Activated T-helper 2 cell treated with anti-CD3 and anti-CD28 coated beads, Interferon-gamma antibody, Interleukin-2, Interleukin-4, amounts not matched to agents 10 μg/mL and 5 μg/mL and 100 μg/mL, durations not matched to agents 14 hours and 24 hours and 36 hours (primary cell): ENCODE measurements at regions of chr10 and their contacts with region 1.

Region 1: DNA sequence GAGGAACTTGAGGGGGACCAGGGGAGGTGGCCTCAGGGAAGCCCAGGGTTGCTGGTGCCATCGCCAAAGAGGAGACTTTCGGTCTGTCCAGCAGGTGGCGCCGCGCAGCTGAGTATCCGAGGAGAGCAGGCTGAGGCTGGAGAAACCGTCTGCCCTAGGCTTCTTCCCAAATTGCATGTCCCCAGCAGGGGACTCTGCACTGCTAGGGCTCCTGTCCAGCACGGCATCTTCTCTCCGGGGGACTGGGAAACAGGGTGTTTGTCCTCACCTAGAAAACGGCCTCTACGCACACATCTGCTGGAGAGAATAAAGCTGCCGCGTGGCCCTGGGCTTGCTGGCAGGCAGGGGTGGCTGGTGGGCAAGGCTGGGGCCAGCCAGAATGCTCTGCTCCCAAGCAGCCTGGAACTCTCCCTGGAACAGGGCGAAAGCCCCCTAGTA is 161.9 kb downstream of the SH2D4B start:
- DNase-seq: peak; percentile 55
- H3K4me3 Mint-ChIP-seq: no peak overlapping the region
- H3K27ac Mint-ChIP-seq: no peak overlapping the region
- H3K4me1 Mint-ChIP-seq: no peaks in the 10 kb centered on the region
- H3K27me3 Mint-ChIP-seq: no peaks in the 10 kb centered on the region

Region 2: GRCh38 chr10:80168679-80169380 is 530.8 kb before region 1 on chr10:
- intact Hi-C with region 1: no loop called
- DNase-seq: no peak
- H3K4me3 Mint-ChIP-seq: no peak overlapping the region
- H3K27ac Mint-ChIP-seq: no peak overlapping the region
- H3K4me1 Mint-ChIP-seq: peaks cover 6% of the 10 kb centered on the region
- H3K27me3 Mint-ChIP-seq: no peaks in the 10 kb centered on the region

Region 3: DNA sequence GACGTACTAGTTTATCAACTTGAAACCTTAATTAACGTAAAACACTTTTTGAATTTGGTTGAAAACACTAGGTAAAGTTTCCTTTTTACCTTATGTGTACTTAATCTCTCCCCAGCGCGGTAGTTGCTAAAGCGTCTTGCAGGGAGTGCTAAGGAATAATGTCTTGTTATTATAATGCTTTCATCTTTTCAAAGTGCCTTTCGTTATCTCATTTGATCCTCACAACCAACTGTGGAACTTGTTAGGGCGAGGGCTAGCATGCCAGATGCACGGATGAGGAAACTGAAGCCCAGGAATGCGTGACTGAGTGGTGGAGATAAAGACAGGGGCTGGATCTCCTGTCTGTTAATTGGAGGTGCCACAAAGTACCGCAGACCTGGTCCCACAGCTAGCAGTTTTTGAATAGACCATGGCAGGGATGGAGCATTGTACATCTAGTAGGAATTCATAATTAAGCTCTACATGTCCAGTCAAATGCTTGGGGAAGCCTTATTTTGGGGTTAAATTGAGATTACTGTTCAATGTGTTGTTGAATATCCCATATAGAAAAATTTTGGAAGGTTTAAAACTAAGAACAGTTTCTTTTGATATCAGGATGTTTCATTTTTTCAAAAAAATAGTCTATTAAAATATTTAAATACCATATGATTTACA is 72.4 kb after region 1 on chr10:
- intact Hi-C with region 1: no loop called
- DNase-seq: no peak
- H3K4me3 Mint-ChIP-seq: no peak overlapping the region
- H3K27ac Mint-ChIP-seq: no peak overlapping the region
- H3K4me1 Mint-ChIP-seq: no peaks in the 10 kb centered on the region
- H3K27me3 Mint-ChIP-seq: no peaks in the 10 kb centered on the region

Region 4: GRCh38 chr10:80924063-80924952 is 224.7 kb after region 1 on chr10:
- intact Hi-C with region 1: loop called (anchors 1 kb)
- DNase-seq: no peak
- H3K4me3 Mint-ChIP-seq: no peak overlapping the region
- H3K27ac Mint-ChIP-seq: no peak overlapping the region
- H3K4me1 Mint-ChIP-seq: no peaks in the 10 kb centered on the region
- H3K27me3 Mint-ChIP-seq: peaks cover 2% of the 10 kb centered on the region

Region 5: DNA sequence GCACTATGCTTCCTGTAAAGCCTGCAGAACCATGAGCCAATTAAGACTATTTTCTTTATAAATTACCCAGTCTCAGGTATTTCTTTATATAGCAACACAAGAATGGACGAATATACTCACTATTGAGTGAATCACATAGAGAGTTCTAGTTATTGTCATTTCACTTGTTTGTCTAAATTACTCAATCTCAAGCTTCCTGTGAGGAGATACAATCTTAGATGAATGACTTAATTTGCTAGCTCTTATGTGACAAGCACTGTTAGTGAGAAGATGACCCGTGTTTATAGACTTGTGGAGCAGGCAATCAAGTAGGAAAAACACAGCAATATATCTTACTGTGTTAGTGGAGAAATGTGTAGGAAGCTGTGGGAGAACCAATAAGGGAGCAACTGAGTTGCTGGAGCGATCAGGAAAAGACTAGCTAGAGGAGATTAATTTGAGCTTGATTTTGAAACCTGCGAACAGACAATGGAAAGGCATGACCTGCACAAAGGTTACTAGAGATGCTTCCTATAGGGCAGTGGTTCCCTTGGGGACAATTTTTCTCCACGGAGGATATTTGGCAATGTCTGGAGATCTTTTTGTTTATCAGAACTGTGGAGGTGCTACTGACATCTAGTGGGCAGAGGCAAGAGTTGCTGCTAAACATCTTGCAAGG is 319.2 kb after region 1 on chr10:
- intact Hi-C with region 1: loop called (anchors 2 kb)
- DNase-seq: no peak
- H3K4me3 Mint-ChIP-seq: no peak overlapping the region
- H3K27ac Mint-ChIP-seq: no peak overlapping the region
- H3K4me1 Mint-ChIP-seq: peaks cover 2% of the 10 kb centered on the region
- H3K27me3 Mint-ChIP-seq: no peaks in the 10 kb centered on the region